Astrocyte of the cerebellum (primary cell): ENCODE measurements at regions of chr20 and their contacts with region 1.

Region 1: GRCh38 chr20:259981-260380 is 2.5 kb downstream of the DEFB132 start:
- DNase-seq: no peak
- H3K4me3 ChIP-seq: no peak overlapping the region
- CTCF ChIP-seq: no peak

Region 2: DNA sequence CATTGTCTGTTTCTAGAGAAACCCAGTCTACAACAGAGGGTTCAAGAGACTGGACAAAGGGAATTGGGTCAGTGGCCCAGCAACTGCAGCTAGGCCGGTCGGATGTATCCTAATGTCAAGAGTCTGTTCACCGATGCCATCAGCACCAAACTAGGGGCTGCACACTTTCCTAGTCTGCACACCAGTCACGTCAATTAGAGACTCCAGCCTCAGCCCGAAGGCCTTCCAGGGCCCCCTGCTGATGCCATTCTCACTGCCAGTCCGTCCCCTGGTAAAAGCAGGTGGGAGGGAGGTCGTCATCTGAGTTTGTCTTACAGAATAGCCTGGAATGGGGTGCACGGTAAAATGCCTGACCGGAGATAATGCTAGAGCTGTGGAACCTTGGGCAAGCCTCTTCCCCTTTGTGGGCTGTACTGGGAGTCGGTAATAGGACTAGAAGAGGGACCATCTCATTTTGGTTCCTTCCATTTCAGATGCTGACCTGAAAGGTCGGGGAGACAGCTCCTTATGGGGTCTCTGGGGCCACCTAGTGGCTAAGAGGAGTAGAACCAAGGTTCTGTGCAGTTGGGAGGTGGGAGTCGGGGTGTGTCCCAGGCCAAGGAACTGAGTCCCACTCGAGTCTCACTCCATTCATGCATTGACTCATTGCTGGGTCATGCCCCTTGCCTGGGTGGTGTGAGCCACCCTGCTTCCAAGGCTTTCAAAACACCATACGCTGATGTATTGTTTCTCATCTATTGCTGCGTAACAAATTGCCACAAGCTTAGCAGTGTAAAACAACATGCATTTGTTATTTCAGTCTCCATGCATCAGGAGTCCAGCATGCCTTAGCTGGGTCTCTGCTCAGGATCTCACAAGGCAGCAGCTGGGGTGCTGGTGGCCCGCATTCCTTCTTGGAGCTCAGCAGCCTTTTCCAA is 70.5 kb after region 1 on chr20:
- in situ Hi-C with region 1: loop called (anchors 5 kb)
- DNase-seq: no peak
- H3K4me3 ChIP-seq: no peak overlapping the region
- CTCF ChIP-seq: peak; percentile 93